ENCODE measurements at regions of chr3 and their contacts with region 1.

Region 1: GRCh38 chr3:113838631-113839209 is at the start of gene GRAMD1C:
- DNase-seq: peak; percentile 95
- H3K4me3 Mint-ChIP-seq: peak within 1 kb of the TSS; percentile 82
- H3K27ac Mint-ChIP-seq: peak within 1 kb of the TSS; percentile 47
- H3K4me1 Mint-ChIP-seq: peaks cover 8% of the 10 kb centered on the region
- H3K27me3 Mint-ChIP-seq: peaks cover 5% of the 10 kb centered on the region
- total RNA-seq, gene GRAMD1C: not detected in 2 replicates

Region 2: GRCh38 chr3:113736548-113737089 is 102.1 kb before region 1 on chr3:
- intact Hi-C with region 1: loop called (anchors 2 kb)
- DNase-seq: peak; percentile 81
- H3K4me3 Mint-ChIP-seq: no peak overlapping the region
- H3K27ac Mint-ChIP-seq: peak overlapping the region; percentile 20
- H3K4me1 Mint-ChIP-seq: peaks cover 43% of the 10 kb centered on the region
- H3K27me3 Mint-ChIP-seq: no peaks in the 10 kb centered on the region

Region 3: DNA sequence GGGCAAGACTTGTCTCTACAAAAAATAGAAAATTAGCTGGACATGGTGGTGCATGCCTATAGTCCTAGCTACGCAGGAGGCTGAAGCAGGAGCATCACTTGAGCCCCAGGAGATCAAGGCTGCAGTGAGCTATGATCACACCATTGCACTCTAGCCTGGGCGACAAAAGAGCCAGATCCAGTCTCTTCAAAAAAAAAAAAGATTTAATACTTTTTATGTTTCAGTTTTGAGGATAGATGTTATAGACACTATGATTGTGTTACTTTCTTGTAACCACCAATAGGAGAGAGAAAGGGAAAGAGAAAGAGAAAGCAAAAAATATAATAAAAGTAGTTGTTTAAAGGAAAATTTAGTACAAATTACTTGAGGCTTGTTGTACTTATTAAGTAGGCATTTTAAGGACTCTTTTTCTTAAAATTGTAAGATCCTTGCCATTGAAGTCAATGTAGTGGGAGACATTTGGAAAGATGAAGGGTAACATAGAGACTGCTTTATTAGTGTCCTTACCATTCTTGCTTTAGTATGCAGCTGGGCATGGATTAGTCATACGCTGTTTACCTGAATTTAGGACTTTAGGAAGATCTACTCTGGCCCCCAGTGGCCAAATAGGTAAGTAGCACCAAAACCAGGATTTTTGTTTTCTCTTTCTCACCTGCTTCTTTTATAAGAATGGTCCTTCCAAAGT is 74.0 kb after region 1 on chr3:
- intact Hi-C with region 1: loop called (anchors 1 kb)
- DNase-seq: peak; percentile 77
- H3K4me3 Mint-ChIP-seq: peak overlapping the region; percentile 53
- H3K27ac Mint-ChIP-seq: no peak overlapping the region
- H3K4me1 Mint-ChIP-seq: peaks cover 3% of the 10 kb centered on the region
- H3K27me3 Mint-ChIP-seq: peaks cover 13% of the 10 kb centered on the region

Region 4: DNA sequence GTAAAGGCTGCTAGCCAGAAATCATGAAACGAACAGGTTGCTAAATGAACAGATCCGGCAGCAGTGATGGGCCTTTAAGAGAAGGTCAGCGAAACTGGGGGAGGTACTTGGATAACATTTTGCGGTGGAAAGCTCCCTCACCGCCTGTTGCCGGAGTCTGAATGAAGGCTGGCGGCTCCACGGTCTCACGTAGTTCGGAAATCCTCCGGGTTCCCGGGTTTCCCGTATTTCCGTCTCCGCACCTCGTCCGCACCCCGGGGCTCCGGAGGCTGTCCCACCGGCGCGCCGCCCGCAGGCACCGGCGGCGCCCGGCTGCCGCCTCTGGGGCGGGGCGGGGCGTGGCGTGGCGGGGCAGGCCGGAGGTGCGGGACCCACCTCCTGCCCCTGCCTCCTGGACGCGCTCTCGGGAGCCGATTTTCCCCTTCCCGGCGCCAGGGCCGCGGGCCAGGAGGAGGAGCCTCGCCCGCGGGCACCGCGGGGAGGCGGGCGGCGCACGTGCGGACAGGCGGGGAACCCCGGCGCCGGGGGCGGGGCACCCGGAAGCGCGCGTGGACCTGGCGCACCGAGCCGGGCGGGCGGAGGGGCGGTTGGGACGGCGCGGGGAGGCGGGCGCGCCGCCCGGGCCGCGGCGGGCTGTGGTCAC is 108.8 kb after region 1 on chr3 and contains the start of gene ZDHHC23:
- intact Hi-C with region 1: loop called (anchors 1 kb)
- DNase-seq: peak; percentile 93
- H3K4me3 Mint-ChIP-seq: peak within 1 kb of the TSS; percentile 82
- H3K27ac Mint-ChIP-seq: peak within 1 kb of the TSS; percentile 57
- H3K4me1 Mint-ChIP-seq: peaks cover 10% of the 10 kb centered on the region
- H3K27me3 Mint-ChIP-seq: peaks cover 61% of the 10 kb centered on the region
- total RNA-seq, gene ZDHHC23: 1.9 and 2.4 TPM in 2 replicates

Measured in activated CD4-positive, alpha-beta T cell treated with anti-CD3 and anti-CD28 coated beads, Interleukin-2, amount 10 ng/mL, durations not matched to agents 24 days and 14 days (primary cell).